ENCODE measurements at regions of chr7 and their contacts with region 1.

Region 1: DNA sequence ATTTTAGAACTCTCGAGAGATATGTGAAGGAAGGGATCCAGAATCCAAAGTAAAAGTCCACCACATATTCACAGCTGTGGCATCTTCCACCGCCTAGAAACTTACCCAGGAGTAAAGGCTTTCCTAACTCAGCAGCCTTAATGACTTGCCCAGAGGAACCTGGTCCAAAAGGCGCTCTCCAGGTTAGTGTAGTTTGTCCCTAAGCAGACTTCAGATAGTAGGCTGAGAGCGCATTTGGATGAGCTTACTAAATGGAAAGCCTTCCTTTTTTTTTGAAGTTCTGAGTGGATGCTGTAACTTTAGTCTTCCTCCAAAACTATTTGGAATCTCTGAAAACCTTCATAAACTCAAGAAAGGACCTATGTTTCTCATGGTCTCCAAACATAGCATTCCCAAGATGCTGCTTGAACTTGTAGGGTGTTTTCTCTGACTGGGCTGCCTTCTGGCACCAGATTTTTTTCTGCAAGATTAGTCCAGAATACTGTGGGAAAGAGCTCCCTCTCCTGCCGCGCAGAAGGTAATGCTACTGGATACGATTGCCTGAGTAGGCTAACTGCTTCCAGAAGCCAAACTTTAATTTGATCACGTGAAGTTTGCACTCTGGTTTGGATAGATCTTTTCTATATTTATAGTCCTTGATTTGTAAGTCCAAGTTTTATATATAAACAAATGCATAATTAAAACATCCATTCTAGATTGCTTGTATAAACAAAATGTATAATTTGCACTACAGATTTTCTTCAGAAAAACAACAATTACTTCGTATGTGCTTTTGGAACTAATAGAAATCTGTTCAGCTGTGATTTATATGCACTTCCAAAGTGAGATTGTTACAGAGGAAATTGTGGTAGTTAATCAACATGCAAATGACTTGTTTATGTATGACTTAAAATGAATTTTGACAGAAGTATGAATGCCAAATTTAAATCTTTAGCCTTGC is 19.6 kb upstream of the GPR37 start:
- DNase-seq: peak; percentile 64
- H3K4me3 Mint-ChIP-seq: no peak overlapping the region
- H3K27ac Mint-ChIP-seq: no peak overlapping the region
- H3K4me1 Mint-ChIP-seq: no peaks in the 10 kb centered on the region
- H3K27me3 Mint-ChIP-seq: no peaks in the 10 kb centered on the region
- CTCF ChIP-seq: peak; percentile 91

Region 2: DNA sequence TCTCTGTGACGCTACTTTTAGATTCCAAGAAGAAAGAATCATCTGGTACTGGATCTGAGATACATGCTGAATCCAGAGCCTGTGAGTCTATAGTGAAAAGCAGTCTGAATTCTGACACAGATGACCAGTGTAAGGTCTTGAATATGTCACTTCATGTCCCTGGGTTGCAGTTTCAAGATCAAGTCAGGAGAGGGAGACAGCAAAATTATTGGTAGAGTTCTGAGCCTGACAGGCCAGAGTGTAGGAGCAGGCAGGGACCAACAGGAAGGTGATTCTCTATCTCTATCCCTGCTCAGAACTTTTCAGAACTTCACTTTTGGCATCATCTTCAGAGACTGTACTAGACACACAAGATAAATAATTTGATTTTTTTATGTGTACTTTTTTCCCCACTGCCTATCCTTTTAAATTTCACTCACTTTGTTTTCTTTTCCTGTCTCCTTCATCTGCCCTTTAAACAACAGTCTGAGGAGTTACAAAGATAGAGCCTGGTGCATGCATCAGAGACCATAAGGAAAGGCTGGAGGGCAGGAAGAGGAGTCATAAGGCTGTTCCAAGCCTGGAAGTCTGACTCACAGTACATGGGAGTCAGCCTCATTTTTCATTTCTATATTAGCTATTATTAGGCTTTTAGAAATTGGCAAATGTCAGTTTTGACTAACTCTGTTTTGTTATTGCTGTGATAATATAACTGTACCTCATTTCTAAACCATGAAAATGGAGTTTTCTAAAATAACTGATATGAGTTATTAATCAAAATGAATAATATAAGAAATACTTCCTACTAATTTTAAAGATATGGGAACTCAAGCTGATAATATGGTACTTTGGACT is 632.1 kb before region 1 on chr7:
- CTCF ChIA-PET with region 1: interaction called, 37 read pairs
- POLR2A ChIA-PET with region 1: no interaction called
- intact Hi-C with region 1: loop called (anchors 1 kb)
- DNase-seq: peak; percentile 62
- H3K4me3 Mint-ChIP-seq: no peak overlapping the region
- H3K27ac Mint-ChIP-seq: peak overlapping the region; percentile 75
- H3K4me1 Mint-ChIP-seq: peaks cover 9% of the 10 kb centered on the region
- H3K27me3 Mint-ChIP-seq: no peaks in the 10 kb centered on the region
- CTCF ChIP-seq: peak; percentile 29

Region 3: DNA sequence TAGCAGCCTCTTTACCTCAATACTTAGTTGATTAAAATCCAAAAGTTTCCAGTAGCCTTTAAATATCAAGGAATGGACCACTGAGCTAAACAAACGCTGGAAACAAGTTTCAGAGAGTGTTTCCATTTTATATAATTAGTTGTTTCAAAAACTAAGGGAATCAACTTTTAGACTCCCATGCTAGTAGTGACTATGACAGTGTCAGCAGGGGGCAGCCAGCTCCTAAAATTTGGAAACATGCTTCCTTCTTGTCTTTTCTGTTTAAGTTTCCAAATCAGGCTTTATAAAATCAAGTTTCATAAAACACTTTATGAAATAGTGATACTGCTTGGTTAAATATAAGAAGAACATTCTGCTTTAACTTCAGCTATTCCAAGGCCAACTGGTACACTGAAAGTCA is 614.1 kb before region 1 on chr7:
- CTCF ChIA-PET with region 1: interaction called, 48 read pairs
- POLR2A ChIA-PET with region 1: interaction called, 4 read pairs
- intact Hi-C with region 1: loop called (anchors 1 kb)
- DNase-seq: peak; percentile 63
- H3K4me3 Mint-ChIP-seq: no peak overlapping the region
- H3K27ac Mint-ChIP-seq: no peak overlapping the region
- H3K4me1 Mint-ChIP-seq: no peaks in the 10 kb centered on the region
- H3K27me3 Mint-ChIP-seq: no peaks in the 10 kb centered on the region
- CTCF ChIP-seq: peak; percentile 66

Region 4: GRCh38 chr7:124179641-124180040 is 605.5 kb before region 1 on chr7:
- CTCF ChIA-PET with region 1: interaction called, 10 read pairs
- POLR2A ChIA-PET with region 1: no interaction called
- intact Hi-C with region 1: no loop called
- DNase-seq: no peak
- H3K4me3 Mint-ChIP-seq: no peak overlapping the region
- H3K27ac Mint-ChIP-seq: no peak overlapping the region
- H3K4me1 Mint-ChIP-seq: no peaks in the 10 kb centered on the region
- H3K27me3 Mint-ChIP-seq: no peaks in the 10 kb centered on the region
- CTCF ChIP-seq: no peak